ENCODE measurements at regions of chr11 and their contacts with region 1.

Region 1: DNA sequence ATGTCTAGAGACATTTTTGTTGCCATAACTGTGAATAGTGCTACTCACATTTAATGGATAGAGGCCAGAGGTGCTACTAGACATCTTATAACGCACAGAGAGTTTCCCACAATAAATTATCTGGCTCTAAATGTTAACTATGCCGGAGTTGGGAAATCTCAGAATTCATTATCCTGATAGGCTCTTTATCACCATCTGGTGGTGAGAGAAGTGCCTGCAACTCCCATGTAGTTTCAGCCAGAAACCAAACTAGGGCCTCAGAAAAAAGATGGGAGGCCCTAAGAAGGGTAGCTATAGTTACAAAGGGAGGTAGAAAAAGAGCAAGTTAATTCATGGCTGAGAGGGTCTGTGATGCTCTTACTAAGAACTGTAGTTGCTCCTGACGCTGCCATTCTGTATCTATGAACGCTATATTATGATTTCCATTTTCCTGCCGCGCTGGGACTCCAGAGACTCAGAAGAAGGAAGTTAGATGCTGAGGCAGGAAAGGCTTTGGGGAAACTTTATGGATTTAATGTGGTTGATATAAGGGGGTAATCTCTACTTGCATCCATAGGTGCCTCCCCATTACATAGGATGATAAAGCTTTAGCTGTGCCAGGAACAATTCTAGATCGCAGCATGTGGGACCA is 22.9 kb upstream of the MRPL17 start:
- DNase-seq: peak in 4 of 10 donors; percentile 20 to 54 (median 42)
- H3K4me3 ChIP-seq: no peak overlapping the region
- H3K27ac ChIP-seq: no peak overlapping the region
- H3K27me3 ChIP-seq: no peaks in the 10 kb centered on the region
- CTCF ChIP-seq: peak; percentile 82 to 98 (median 94)

Region 2: GRCh38 chr11:6531267-6531752 is 174.7 kb before region 1 on chr11:
- intact Hi-C with region 1: loop called in 1 of 2 experiments (anchors 1 kb)
- DNase-seq: peak in 1 of 10 donors; percentile 28
- H3K4me3 ChIP-seq: no peak overlapping the region
- H3K27ac ChIP-seq: peak overlapping the region in 4 of 59 donors; percentile 5 to 44 (median 18)
- H3K27me3 ChIP-seq: no peaks in the 10 kb centered on the region
- CTCF ChIP-seq: peak; percentile 59 to 91 (median 78)

Region 3: DNA sequence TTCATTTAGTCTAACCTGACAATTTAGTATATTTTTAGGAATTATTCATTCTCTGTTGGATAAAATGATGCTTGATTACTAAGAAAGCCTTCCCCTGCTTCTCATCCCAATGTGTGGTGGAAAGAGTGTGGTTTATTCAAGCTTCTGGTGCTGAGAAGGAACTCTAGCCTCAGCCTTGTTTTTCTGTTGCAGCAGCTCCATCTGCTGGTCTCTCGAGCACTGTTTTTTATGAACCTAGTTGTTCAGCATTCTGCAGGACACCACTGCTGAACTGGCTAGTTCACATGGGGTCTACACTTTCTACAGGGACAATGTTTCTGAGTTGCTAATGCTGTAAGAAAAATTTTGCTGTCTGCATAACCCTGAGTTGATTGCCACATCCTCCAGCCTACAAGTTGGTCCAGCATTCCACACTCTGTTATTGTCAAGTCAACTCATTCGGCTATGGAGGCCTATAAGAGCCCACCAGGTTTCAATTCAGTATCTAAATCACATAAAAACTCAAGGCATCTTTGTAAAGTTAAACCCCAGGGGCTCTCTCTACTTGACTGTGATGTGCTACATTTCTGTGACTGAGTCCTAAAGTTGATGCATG is 51.5 kb after region 1 on chr11:
- intact Hi-C with region 1: loop called in 1 of 2 experiments (anchors 10 kb)
- DNase-seq: peak in 8 of 10 donors; percentile 21 to 80 (median 56)
- H3K4me3 ChIP-seq: no peak overlapping the region
- H3K27ac ChIP-seq: no peak overlapping the region
- H3K27me3 ChIP-seq: no peaks in the 10 kb centered on the region
- CTCF ChIP-seq: peak; percentile 26 to 90 (median 70)